ENCODE measurements at regions of chr4 and their contacts with region 1.

Region 1: DNA sequence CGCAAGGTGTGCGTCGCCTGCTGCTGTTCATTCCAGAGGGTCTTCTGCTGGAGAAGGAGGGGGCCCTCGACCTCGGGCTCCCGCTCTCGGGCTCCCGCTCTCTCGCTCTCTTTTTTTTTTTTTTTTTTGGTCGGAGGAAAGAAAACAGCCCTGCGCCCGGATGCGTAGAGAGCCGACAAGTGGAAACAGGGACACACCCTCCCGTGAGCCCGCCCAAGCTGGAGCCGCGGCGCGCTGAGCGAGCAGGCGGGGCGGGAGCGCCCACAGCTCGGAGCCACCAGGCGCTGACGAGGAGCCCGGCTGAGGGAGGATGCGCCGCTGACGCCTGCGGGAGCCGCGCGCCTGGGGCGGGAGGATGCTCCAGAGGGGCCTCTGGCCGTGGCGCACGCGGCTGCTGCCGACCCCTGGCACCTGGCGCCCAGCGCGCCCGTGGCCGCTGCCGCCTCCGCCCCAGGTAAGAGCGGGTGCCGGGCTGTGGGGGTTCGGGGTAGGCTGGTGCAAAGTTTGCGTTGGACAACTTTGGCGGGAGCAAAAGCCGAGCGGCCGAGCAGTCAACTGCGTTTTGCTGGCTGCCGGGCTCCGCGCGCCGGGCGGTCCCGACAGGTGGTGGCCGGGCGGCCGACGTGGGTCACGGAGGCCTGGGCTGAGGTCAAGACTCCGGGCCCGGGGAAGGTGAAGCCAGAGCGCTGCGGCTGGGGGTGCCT is at the start of gene MCUB:
- DNase-seq: peak; percentile 85
- H3K4me3 ChIP-seq: peak within 1 kb of the TSS; percentile 73 to 93 (median 90)
- H3K27ac ChIP-seq: peak within 1 kb of the TSS; percentile 94
- H3K4me1 ChIP-seq: peaks cover 16% of the 10 kb centered on the region
- H3K27me3 ChIP-seq: no peaks in the 10 kb centered on the region
- CTCF ChIP-seq: no peak
- POLR2A ChIP-seq: no peak
- total RNA-seq, gene MCUB: 32.5 and 35.2 TPM in 2 replicates

Region 2: GRCh38 chr4:109486007-109486406 is 74.1 kb before region 1 on chr4:
- CTCF ChIA-PET with region 1: no interaction called
- POLR2A ChIA-PET with region 1: no interaction called
- dilution Hi-C with region 1: no loop called
- intact Hi-C with region 1: no loop called
- DNase-seq: no peak
- H3K4me3 ChIP-seq: no peak overlapping the region
- H3K27ac ChIP-seq: no peak overlapping the region
- H3K4me1 ChIP-seq: no peaks in the 10 kb centered on the region
- H3K27me3 ChIP-seq: no peaks in the 10 kb centered on the region
- CTCF ChIP-seq: no peak
- POLR2A ChIP-seq: no peak

Region 3: DNA sequence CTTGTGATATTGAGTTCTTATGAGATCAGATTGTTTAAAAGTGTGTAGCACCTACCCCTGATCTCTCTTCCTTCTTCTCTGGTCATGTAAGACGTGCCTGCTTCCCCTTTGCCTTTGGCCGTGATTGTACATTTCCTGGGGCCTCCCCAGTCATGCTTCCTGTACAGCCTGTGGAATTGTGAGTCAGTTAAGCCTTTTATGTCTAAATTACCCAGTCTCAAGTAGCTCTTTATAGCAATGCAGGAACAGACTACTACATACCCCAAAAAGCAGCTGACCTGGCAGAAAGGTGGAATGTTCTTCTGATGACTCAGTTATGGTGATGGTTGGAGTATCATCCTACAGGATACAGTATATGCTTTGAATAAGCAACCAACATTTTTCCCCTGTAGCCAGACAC is 11.5 kb before region 1 on chr4:
- CTCF ChIA-PET with region 1: interaction called, 4 read pairs
- POLR2A ChIA-PET with region 1: interaction called, 4 read pairs
- dilution Hi-C with region 1: no loop called
- intact Hi-C with region 1: loop called (anchors 1 kb)
- DNase-seq: peak; percentile 94
- H3K4me3 ChIP-seq: peak overlapping the region in 1 of 3 experiments; percentile 1
- H3K27ac ChIP-seq: peak overlapping the region; percentile 84
- H3K4me1 ChIP-seq: peaks cover 17% of the 10 kb centered on the region
- H3K27me3 ChIP-seq: no peaks in the 10 kb centered on the region
- CTCF ChIP-seq: no peak
- POLR2A ChIP-seq: peak; percentile 36

Region 4: DNA sequence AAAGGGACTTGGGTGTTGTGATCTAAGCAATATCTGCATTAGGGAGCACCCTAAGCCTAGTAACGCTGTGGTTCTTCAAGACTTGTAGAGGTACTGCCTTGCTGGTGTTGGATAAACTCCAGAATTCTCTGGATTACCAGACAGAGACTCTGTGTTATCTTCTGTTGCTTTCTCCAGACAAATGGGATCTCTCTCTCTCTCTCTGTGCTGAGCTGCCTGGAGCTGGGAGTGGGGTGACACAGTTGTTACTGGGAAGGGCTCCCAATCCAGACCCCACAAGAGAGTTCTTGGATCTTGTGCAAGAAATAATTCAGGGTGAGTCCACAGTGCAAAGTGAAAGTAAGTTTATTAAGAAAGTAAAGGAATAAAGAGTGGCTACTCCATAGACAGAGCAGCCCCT is 48.7 kb after region 1 on chr4:
- CTCF ChIA-PET with region 1: no interaction called
- POLR2A ChIA-PET with region 1: no interaction called
- dilution Hi-C with region 1: no loop called
- intact Hi-C with region 1: loop called (anchors 1 kb)
- DNase-seq: no peak
- H3K4me3 ChIP-seq: no peak overlapping the region
- H3K27ac ChIP-seq: no peak overlapping the region
- H3K4me1 ChIP-seq: peaks cover 4% of the 10 kb centered on the region
- H3K27me3 ChIP-seq: no peaks in the 10 kb centered on the region
- CTCF ChIP-seq: no peak
- POLR2A ChIP-seq: no peak

Region 5: DNA sequence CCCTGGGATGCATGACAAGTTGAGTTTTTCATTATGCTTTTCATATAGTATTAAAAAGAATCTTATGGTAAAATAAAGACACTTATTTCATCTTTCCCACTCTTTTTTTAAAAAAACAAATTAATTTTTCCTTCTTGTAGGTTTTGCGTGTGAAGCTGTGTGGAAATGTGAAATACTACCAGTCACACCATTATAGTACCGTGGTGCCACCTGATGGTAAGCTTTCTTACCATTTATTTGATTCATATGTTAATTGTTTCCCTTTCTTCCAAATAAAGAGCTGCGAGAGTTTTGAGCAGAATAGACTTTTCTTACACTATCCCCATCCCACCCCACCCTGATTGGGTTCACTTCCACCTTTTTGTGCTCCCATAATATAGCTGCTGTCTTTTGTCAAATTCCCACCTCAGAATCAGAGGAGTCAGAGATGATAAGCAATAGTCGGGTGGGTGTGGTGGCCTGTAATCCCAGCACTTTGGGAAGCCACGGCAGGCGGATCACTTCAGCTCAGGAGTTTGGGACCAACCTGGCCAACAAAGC is 98.8 kb after region 1 on chr4:
- CTCF ChIA-PET with region 1: interaction called, 17 read pairs
- POLR2A ChIA-PET with region 1: no interaction called
- dilution Hi-C with region 1: no loop called
- intact Hi-C with region 1: no loop called
- DNase-seq: peak; percentile 45
- H3K4me3 ChIP-seq: no peak overlapping the region
- H3K27ac ChIP-seq: no peak overlapping the region
- H3K4me1 ChIP-seq: no peaks in the 10 kb centered on the region
- H3K27me3 ChIP-seq: no peaks in the 10 kb centered on the region
- CTCF ChIP-seq: no peak
- POLR2A ChIP-seq: no peak

Region 6: DNA sequence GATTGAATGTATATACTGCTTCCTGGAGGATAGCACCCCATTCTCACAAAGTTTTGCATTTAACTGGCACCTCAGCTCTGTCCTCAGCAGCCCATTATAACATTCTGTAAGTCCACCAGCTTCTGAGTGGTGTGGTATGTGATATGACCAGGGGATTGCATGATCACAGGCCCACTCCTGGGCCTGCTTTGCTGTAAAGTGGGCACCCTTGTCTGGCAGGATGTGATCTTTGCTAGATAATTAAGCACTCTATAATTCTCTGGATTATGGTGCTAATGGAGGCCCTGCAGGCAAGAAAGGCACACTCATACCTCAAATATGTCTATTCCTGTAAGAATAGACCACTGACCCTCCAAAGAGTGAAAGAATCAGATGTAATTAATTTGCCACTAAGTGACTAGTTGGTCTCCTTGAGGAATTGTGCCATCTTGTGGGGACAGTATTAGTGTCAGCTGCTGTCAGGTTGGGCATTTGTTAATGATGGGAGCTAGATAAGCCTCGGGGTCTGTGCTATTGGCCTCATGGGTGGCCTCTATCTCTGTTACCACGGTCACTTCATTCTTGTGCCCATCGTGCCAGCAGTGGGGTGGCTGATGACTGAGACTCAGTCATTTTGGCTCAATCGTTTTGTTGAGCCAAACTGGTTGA is 243.9 kb after region 1 on chr4:
- CTCF ChIA-PET with region 1: interaction called, 4 read pairs
- POLR2A ChIA-PET with region 1: no interaction called
- dilution Hi-C with region 1: no loop called
- intact Hi-C with region 1: loop called (anchors 5 kb)
- DNase-seq: peak; percentile 56
- H3K4me3 ChIP-seq: no peak overlapping the region
- H3K27ac ChIP-seq: no peak overlapping the region
- H3K4me1 ChIP-seq: peaks cover 12% of the 10 kb centered on the region
- H3K27me3 ChIP-seq: no peaks in the 10 kb centered on the region
- CTCF ChIP-seq: peak; percentile 27 to 34
- POLR2A ChIP-seq: no peak